Activated CD8-positive, alpha-beta T cell treated with anti-CD3 and anti-CD28 coated beads for 36 hours (primary cell): ENCODE measurements at regions of chr2 and their contacts with region 1.

Region 1: GRCh38 chr2:230170532-230170931 is 49.3 kb downstream of the SP110 start:
- DNase-seq: peak; percentile 20
- ATAC-seq: no peak
- H3K4me3 Mint-ChIP-seq: no peak overlapping the region
- H3K27ac Mint-ChIP-seq: peak overlapping the region; percentile 27
- H3K4me1 Mint-ChIP-seq: peaks cover 6% of the 10 kb centered on the region
- H3K27me3 Mint-ChIP-seq: no peaks in the 10 kb centered on the region
- CTCF ChIP-seq: no peak

Region 2: GRCh38 chr2:230160112-230160660 is 10.3 kb before region 1 on chr2:
- CTCF ChIA-PET with region 1: interaction called, 38 read pairs
- POLR2A ChIA-PET with region 1: interaction called, 4 read pairs
- intact Hi-C with region 1: no loop called
- DNase-seq: peak; percentile 61
- ATAC-seq: peak; percentile 62
- H3K4me3 Mint-ChIP-seq: no peak overlapping the region
- H3K27ac Mint-ChIP-seq: no peak overlapping the region
- H3K4me1 Mint-ChIP-seq: peaks cover 8% of the 10 kb centered on the region
- H3K27me3 Mint-ChIP-seq: no peaks in the 10 kb centered on the region
- CTCF ChIP-seq: peak; percentile 92

Region 3: GRCh38 chr2:230234845-230235244 is 64.3 kb after region 1 on chr2:
- CTCF ChIA-PET with region 1: no interaction called
- POLR2A ChIA-PET with region 1: no interaction called
- intact Hi-C with region 1: no loop called
- DNase-seq: no peak
- ATAC-seq: peak; percentile 74
- H3K4me3 Mint-ChIP-seq: peak overlapping the region; percentile 4
- H3K27ac Mint-ChIP-seq: peak overlapping the region; percentile 88
- H3K4me1 Mint-ChIP-seq: peaks cover 48% of the 10 kb centered on the region
- H3K27me3 Mint-ChIP-seq: no peaks in the 10 kb centered on the region
- CTCF ChIP-seq: no peak

Region 4: DNA sequence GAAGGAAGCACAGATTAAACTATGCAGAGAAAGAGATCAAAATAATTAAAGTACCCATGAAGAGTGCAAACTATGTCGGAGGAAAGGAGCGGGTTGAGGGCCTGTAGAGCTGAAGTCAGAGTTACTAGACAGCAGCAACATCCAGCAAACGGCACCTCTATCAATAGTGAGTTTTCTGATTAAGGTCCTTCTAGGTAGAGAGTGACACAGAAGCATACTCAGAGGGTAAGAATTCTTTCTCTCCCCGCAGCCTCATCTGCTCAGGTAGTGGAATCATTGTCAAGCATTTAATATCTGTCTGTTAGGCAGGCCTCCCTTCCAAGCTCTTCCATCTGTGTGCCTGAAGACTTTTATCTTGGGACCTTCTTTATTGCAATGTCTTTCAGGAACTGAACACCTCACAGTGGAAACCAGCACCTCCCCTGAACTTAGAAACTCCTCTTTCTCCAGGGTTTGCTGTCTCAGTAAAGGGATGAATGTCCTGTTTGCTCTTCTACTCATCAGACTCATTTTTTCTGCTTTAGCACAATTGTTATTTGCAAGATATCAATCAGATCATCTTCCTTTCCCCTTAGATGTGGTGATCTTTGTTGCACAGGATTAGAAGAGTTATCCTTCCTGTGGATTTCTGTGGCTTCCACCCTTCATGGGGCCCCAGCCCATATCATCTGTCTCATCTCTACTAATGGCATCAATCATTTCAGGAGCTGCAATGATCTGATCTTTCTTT is 83.8 kb after region 1 on chr2:
- CTCF ChIA-PET with region 1: no interaction called
- POLR2A ChIA-PET with region 1: no interaction called
- intact Hi-C with region 1: no loop called
- DNase-seq: peak; percentile 76
- ATAC-seq: peak; percentile 72
- H3K4me3 Mint-ChIP-seq: no peak overlapping the region
- H3K27ac Mint-ChIP-seq: no peak overlapping the region
- H3K4me1 Mint-ChIP-seq: peaks cover 24% of the 10 kb centered on the region
- H3K27me3 Mint-ChIP-seq: no peaks in the 10 kb centered on the region
- CTCF ChIP-seq: no peak